ENCODE measurements at regions of chr1 and their contacts with region 1.

Region 1: GRCh38 chr1:20493839-20494608 is 8.0 kb upstream of the CAMK2N1 start:
- DNase-seq: peak; percentile 70
- H3K4me3 Mint-ChIP-seq: no peak overlapping the region
- H3K27ac Mint-ChIP-seq: no peak overlapping the region
- H3K4me1 Mint-ChIP-seq: peaks cover 18% of the 10 kb centered on the region
- H3K27me3 Mint-ChIP-seq: peaks cover 14% of the 10 kb centered on the region

Region 2: DNA sequence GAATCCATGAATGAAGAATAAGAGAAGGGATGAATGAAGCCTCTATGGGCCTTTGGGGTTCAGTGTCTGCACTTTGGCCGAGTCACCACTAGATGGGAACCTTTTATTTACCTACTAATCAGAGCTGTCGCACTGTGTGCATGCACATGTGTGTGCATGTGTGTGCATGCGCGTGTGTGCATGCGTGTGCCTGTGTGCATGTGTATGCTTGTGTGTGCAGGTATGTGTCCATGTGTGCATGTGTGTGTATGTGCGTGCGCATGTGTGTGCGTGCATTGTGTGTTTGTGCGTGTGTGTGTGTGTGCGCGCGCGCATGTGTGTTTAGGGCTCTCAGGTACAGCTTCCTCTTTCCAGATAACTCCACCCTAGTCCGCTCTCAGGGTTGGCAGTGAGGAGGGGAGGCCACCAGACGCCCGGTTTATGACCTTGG is 328.5 kb before region 1 on chr1:
- intact Hi-C with region 1: loop called (anchors 5 kb)
- DNase-seq: no peak
- H3K4me3 Mint-ChIP-seq: no peak overlapping the region
- H3K27ac Mint-ChIP-seq: no peak overlapping the region
- H3K4me1 Mint-ChIP-seq: peaks cover 11% of the 10 kb centered on the region
- H3K27me3 Mint-ChIP-seq: peaks cover 4% of the 10 kb centered on the region

Region 3: GRCh38 chr1:20233394-20233793 is 260.6 kb before region 1 on chr1:
- intact Hi-C with region 1: loop called (anchors 1 kb)
- DNase-seq: no peak
- H3K4me3 Mint-ChIP-seq: no peak overlapping the region
- H3K27ac Mint-ChIP-seq: no peak overlapping the region
- H3K4me1 Mint-ChIP-seq: no peaks in the 10 kb centered on the region
- H3K27me3 Mint-ChIP-seq: peaks cover 36% of the 10 kb centered on the region

Region 4: DNA sequence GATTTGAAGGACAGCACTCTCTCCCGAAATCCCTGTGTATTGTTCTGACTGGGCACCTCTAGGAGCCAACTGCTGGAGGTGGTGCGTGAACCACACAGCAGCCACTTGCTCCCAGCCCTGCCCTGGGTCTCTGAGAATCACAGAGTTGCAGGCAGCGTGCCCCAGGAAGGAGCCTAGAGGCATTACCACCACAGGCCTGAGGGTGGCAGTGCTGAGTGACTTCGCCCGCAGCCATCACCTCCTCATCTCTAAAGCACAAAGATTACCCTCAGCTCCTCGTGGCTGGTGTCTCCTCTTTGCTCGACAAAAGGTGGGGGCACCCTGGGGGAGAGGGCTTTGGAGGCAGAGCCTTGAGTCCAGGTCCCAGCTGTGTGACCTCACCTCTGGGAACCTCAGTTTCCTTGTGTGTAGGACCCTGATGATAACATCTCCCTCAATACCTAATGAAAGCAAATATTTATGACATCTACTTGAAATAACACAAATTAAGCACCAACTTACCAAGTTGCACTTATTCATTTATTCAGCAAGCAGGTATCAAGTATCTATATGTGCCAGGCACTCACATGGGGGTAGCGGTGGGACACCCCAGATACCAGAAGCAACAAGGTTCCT is 117.0 kb before region 1 on chr1:
- intact Hi-C with region 1: loop called (anchors 1 kb)
- DNase-seq: peak; percentile 21
- H3K4me3 Mint-ChIP-seq: no peak overlapping the region
- H3K27ac Mint-ChIP-seq: no peak overlapping the region
- H3K4me1 Mint-ChIP-seq: peaks cover 3% of the 10 kb centered on the region
- H3K27me3 Mint-ChIP-seq: peaks cover 17% of the 10 kb centered on the region

Region 5: GRCh38 chr1:20540281-20540680 is 46.3 kb after region 1 on chr1:
- intact Hi-C with region 1: no loop called
- DNase-seq: no peak
- H3K4me3 Mint-ChIP-seq: no peak overlapping the region
- H3K27ac Mint-ChIP-seq: no peak overlapping the region
- H3K4me1 Mint-ChIP-seq: no peaks in the 10 kb centered on the region
- H3K27me3 Mint-ChIP-seq: peaks cover 8% of the 10 kb centered on the region

Region 6: DNA sequence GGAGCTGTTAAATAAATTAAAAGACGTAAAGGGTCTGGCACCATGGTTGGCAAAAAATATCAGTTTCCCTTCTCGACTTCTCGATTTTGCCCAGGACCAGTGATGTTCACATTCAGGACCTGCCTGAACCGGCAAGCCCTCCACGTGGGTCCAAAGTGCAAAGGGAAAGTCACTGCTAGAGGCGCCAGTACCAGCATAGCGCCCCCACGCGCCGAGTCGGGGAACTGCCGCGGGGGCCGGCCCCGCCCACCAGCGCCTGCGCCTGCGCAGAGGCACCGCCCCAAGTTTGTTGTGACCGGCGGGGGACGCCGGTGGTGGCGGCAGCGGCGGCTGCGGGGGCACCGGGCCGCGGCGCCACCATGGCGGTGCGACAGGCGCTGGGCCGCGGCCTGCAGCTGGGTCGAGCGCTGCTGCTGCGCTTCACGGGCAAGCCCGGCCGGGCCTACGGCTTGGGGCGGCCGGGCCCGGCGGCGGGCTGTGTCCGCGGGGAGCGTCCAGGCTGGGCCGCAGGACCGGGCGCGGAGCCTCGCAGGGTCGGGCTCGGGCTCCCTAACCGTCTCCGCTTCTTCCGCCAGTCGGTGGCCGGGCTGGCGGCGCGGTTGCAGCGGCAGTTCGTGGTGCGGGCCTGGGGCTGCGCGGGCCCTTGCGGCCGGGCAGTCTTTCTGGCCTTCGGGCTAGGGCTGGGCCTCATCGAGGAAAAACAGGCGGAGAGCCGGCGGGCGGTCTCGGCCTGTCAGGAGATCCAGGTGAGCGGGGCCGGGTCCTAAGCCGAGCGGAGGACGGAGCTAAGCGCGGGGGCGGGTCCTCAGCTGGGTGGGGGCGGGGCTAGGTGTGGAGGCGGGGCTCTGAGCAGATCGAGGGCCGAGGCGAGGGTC is 139.4 kb after region 1 on chr1 and contains the start of gene PINK1:
- intact Hi-C with region 1: no loop called
- DNase-seq: peak; percentile 85
- H3K4me3 Mint-ChIP-seq: peak within 1 kb of the TSS; percentile 83
- H3K27ac Mint-ChIP-seq: peak within 1 kb of the TSS; percentile 48
- H3K4me1 Mint-ChIP-seq: peaks cover 10% of the 10 kb centered on the region
- H3K27me3 Mint-ChIP-seq: peaks cover 1% of the 10 kb centered on the region
- total RNA-seq, gene PINK1: 2.6 and 3.3 TPM in 2 replicates

Measured in activated T-helper 1 cell treated with anti-CD3 and anti-CD28 coated beads, Interleukin-12 subunit alpha, Interleukin-12 subunit beta, Interleukin-2, Interleukin-4 antibody, amounts not matched to agents 30 ng/mL and 10 ng/mL and 1 ng/mL, durations not matched to agents 14 hours and 24 hours and 36 hours (primary cell).